ENCODE measurements at regions of chr3 and their contacts with region 1.

Region 1: DNA sequence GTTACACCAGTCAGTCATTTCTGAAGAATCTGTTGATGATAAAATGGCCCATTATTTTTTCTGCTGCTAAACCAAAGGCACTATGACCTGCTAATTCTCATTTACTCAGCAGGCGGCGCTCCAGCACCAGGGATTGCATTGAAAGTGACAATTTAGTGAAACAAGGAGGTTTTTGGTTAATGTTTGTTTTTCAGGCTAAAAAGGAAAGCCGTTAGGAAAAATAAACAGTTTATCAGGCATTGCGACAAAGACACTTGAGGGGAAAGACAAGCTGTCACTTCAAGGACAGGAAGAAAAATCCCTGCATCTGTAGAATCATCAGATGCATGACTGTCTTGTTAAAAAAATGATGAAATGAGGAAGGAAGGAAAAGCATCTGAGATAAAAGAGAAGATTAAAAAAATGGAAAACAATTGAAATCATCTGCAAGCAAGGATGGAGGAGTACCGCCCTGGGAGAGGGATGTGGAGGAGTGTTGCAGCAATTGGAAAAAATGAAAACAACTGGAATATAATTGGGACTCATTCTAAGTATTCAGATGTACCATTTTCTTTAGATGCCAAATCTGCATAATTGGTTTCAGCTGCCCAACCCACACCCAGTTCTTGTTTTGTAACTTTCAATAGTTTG is 54.0 kb downstream of the NR1D2 start:
- DNase-seq: peak in 31 of 35 experiments; percentile 7 to 63 (median 42)
- ATAC-seq: no peak
- H3K4me3 ChIP-seq: no peak overlapping the region
- H3K4me3 Mint-ChIP-seq: no peak overlapping the region
- H3K27ac ChIP-seq: no peak overlapping the region
- H3K27ac Mint-ChIP-seq: no peak overlapping the region
- H3K4me1 ChIP-seq: no peaks in the 10 kb centered on the region
- H3K4me1 Mint-ChIP-seq: peaks cover 2 to 4% (median 3%) of the 10 kb centered on the region in 3 donors
- H3K27me3 ChIP-seq: no peaks in the 10 kb centered on the region
- H3K27me3 Mint-ChIP-seq: no peaks in the 10 kb centered on the region

Region 2: DNA sequence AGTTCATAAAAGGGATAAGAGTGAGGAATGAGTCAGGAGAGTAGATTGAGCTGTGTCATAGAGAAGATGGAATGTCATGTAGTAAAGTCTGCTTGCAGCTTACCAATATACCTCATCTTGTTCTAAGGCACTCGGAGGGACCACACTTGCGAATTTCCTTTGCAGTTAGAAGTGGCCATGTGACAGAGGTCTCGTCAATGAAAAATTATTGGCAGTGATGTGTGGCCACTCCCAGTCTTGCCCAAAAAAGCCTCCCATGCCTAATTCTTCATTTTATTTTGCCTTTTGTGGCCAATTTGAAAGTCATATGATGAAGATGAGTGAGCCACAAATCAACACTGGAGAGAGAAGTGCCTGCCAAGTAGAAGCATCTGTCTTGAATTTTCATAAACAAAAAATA is 1782.5 kb before region 1 on chr3:
- CTCF ChIA-PET with region 1: no interaction called
- POLR2A ChIA-PET with region 1: no interaction called
- DNase-seq: no peak
- ATAC-seq: no peak
- H3K4me3 ChIP-seq: no peak overlapping the region
- H3K4me3 Mint-ChIP-seq: no peak overlapping the region
- H3K27ac ChIP-seq: no peak overlapping the region
- H3K27ac Mint-ChIP-seq: no peak overlapping the region
- H3K4me1 ChIP-seq: no peaks in the 10 kb centered on the region
- H3K4me1 Mint-ChIP-seq: no peaks in the 10 kb centered on the region
- H3K27me3 ChIP-seq: no peaks in the 10 kb centered on the region
- H3K27me3 Mint-ChIP-seq: no peaks in the 10 kb centered on the region

Region 3: DNA sequence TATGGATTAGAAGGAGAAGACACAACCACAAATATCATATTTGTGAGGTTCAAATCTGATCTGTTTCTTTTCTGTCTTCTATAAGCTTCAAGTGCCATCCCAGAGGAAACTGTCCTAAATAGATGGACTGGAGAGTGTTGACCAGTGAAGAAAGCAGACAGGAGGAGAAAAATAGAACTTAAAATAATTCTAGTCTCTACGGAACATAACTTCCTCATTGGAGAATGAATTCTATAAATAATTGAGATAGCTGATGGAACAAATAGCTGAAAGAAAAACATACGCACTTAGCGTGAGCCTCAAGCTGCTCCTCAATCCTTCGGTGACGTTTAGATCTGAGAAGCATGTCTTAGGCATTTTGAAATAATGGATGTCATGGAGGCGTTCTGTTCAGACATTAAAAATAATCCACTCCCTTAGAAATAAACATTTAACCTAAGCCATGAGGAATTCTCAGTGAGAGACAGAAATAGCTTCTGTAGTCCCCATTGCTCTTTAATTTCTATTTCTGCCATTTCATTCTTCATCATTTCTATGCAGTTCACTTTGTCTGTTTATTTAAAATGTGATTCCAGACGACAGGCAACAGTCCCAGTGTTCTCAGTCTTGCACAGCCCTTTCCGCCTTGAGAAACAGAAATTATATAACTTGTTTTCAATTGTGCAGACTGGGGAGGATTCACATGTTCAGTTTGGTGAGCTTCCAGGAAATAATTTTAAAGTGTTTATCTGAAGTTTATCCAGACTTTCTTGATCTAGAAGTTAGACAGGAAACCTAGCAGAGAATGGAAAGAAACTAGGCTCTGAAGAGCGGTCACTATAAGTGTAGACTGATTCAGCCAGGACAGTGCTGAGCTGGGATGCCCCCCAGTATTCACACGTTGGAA is 43.3 kb after region 1 on chr3:
- CTCF ChIA-PET with region 1: no interaction called
- POLR2A ChIA-PET with region 1: no interaction called
- DNase-seq: no peak
- ATAC-seq: no peak
- H3K4me3 ChIP-seq: no peak overlapping the region
- H3K4me3 Mint-ChIP-seq: no peak overlapping the region
- H3K27ac ChIP-seq: no peak overlapping the region
- H3K27ac Mint-ChIP-seq: no peak overlapping the region
- H3K4me1 ChIP-seq: no peaks in the 10 kb centered on the region
- H3K4me1 Mint-ChIP-seq: no peaks in the 10 kb centered on the region
- H3K27me3 ChIP-seq: peaks cover 0 to 4% of the 10 kb centered on the region in 2 experiments
- H3K27me3 Mint-ChIP-seq: no peaks in the 10 kb centered on the region

Region 4: GRCh38 chr3:25594007-25594502 is 1594.9 kb after region 1 on chr3:
- CTCF ChIA-PET with region 1: interaction called in 1 of 2 experiments, 10 read pairs
- POLR2A ChIA-PET with region 1: no interaction called
- DNase-seq: peak in 2 of 35 experiments; percentile 24 to 57
- ATAC-seq: peak; percentile 46 to 62 (median 50)
- H3K4me3 ChIP-seq: no peak overlapping the region
- H3K4me3 Mint-ChIP-seq: no peak overlapping the region
- H3K27ac ChIP-seq: no peak overlapping the region
- H3K27ac Mint-ChIP-seq: peak overlapping the region; percentile 8 to 25
- H3K4me1 ChIP-seq: no peaks in the 10 kb centered on the region
- H3K4me1 Mint-ChIP-seq: peaks cover 2 to 6% (median 6%) of the 10 kb centered on the region in 3 donors
- H3K27me3 ChIP-seq: no peaks in the 10 kb centered on the region
- H3K27me3 Mint-ChIP-seq: no peaks in the 10 kb centered on the region